ENCODE measurements at regions of chr1 and their contacts with region 1.

Region 1: GRCh38 chr1:53220171-53220961 is at the start of gene CZIB:
- DNase-seq: peak; percentile 80 to 96 (median 89)
- ATAC-seq: peak; percentile 90
- H3K4me3 ChIP-seq: peak within 1 kb of the TSS; percentile 84
- H3K4me3 Mint-ChIP-seq: peak within 1 kb of the TSS; percentile 98
- H3K27ac ChIP-seq: peak within 1 kb of the TSS; percentile 95 to 96
- H3K27ac Mint-ChIP-seq: peak within 1 kb of the TSS; percentile 97
- H3K4me1 ChIP-seq: peaks cover 19% of the 10 kb centered on the region
- H3K4me1 Mint-ChIP-seq: peaks cover 35% of the 10 kb centered on the region
- H3K27me3 ChIP-seq: no peaks in the 10 kb centered on the region
- H3K27me3 Mint-ChIP-seq: no peaks in the 10 kb centered on the region
- CTCF ChIP-seq: no peak
- total RNA-seq, gene CZIB: 28.8 to 28.9 TPM

Region 2: DNA sequence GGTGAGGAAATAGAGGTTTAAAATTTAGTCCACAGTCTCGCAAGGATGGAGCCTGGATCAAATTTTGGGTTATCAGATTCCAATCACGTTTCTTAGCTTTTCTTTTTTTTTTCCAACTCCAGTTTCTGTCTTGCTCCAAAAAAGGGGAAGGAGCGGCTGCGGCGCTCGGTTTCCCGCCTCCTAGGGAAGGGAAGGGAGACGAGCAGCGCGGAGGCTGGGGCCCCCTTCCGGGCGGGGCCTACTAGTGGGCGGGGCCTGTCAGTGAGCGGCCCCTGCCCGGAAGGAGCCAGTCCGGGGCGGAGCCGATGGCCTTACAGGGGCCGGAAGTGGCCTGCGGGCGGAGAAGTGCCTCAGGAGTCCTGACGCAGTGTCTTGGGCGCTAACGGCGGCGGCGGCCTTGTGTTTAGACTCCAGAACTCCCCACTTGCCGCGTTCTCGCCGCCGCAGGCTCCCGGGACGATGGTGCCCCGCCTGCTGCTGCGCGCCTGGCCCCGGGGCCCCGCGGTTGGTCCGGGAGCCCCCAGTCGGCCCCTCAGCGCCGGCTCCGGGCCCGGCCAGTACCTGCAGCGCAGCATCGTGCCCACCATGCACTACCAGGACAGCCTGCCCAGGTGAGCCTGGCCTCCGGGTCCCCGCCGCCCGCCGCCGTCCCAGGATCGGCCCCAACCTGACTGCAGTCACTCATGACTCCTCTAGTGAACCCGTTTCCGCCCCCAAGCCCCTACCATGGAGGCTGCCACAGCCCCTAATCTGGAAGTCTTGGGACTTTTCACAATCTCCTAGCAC is 23.7 kb before region 1 on chr1 and contains the start of gene CPT2:
- CTCF ChIA-PET with region 1: interaction called, 3 read pairs
- POLR2A ChIA-PET with region 1: interaction called, 13 read pairs
- intact Hi-C with region 1: loop called (anchors 1 kb)
- DNase-seq: peak; percentile 75 to 96 (median 89)
- ATAC-seq: peak; percentile 92
- H3K4me3 ChIP-seq: peak within 1 kb of the TSS; percentile 92
- H3K4me3 Mint-ChIP-seq: peak within 1 kb of the TSS; percentile 93
- H3K27ac ChIP-seq: peak within 1 kb of the TSS; percentile 93 to 97
- H3K27ac Mint-ChIP-seq: peak within 1 kb of the TSS; percentile 93
- H3K4me1 ChIP-seq: peaks cover 25% of the 10 kb centered on the region
- H3K4me1 Mint-ChIP-seq: peaks cover 29% of the 10 kb centered on the region
- H3K27me3 ChIP-seq: no peaks in the 10 kb centered on the region
- H3K27me3 Mint-ChIP-seq: no peaks in the 10 kb centered on the region
- CTCF ChIP-seq: no peak
- total RNA-seq, gene CPT2: 10.6 to 12.0 TPM

Region 3: GRCh38 chr1:53249706-53250105 is 29.3 kb after region 1 on chr1:
- CTCF ChIA-PET with region 1: no interaction called
- POLR2A ChIA-PET with region 1: no interaction called
- intact Hi-C with region 1: no loop called
- DNase-seq: no peak
- ATAC-seq: no peak
- H3K4me3 ChIP-seq: no peak overlapping the region
- H3K4me3 Mint-ChIP-seq: no peak overlapping the region
- H3K27ac ChIP-seq: no peak overlapping the region
- H3K27ac Mint-ChIP-seq: no peak overlapping the region
- H3K4me1 ChIP-seq: no peaks in the 10 kb centered on the region
- H3K4me1 Mint-ChIP-seq: no peaks in the 10 kb centered on the region
- H3K27me3 ChIP-seq: no peaks in the 10 kb centered on the region
- H3K27me3 Mint-ChIP-seq: no peaks in the 10 kb centered on the region
- CTCF ChIP-seq: no peak

Measured in CD4-positive, alpha-beta T cell (primary cell).